Mammary epithelial cell (primary cell): ENCODE measurements at regions of chr2 and their contacts with region 1.

Region 1: DNA sequence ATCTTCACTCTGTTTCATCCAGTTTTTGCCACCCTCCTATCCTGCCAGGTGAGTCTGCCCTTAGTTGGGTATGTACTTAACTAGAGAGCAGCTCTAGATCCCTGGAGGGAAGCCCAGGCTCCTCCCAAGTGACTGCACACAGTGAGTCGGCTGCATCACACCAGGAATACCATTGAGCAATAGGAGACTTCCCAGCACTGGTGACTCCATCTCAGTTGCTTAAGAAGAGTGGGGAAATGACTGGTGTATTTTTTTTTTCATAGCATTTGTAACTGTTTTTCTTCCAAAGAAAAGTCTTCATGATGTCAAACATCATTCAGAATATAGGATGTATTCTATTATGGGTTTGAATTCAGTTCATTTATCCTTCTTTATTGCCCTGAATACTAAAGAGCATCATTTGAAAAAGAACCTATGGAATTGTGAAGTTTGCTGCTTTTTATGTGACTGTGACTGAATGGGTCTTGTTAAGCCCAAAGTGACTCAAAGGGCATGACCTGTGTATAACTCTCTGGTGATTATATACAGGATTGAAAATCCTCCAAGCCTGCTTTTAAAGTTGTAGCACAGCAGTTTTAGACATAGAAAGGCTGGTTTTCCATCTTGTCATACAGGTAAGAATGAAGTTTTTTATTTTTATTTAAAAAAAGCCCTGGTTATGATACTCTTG is 84.3 kb downstream of the MAP3K20 start:
- DNase-seq: peak; percentile 99
- H3K4me3 ChIP-seq: no peak overlapping the region
- H3K27ac ChIP-seq: peak overlapping the region; percentile 82
- H3K4me1 ChIP-seq: peaks cover 32% of the 10 kb centered on the region
- H3K27me3 ChIP-seq: no peaks in the 10 kb centered on the region
- CTCF ChIP-seq: no peak

Region 2: DNA sequence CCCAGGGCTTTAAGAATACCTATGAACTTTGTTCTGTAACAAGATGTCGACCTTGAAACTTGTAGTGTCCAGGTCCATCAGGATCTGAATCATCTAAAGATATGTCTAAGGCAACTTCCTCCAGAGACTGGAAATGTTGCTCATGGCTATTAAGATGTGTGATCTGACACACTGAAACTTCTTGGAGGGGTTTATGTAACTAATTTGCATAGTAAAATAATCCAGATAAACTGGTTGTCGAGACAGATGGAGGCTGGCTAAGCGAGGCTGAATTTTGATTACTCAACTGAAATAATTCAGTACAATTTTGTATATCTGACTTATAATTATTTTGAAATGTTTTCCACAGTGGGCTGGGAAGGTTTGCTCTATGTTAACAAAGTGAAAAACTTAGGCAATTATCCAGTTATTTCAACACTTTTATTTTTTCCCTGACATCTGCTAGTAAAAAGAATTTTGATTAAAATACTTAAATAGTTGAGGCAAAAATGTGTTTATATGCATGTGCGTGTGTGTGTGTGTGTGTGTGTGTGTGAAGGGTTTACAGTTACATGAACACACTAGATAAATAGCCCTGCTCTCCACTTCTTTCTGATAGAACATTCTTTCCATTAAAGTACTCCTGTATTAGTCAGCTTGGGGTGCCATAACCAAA is 95.7 kb before region 1 on chr2:
- CTCF ChIA-PET with region 1: no interaction called
- dilution Hi-C with region 1: no loop called
- in situ Hi-C with region 1: no loop called
- intact Hi-C with region 1: no loop called
- DNase-seq: no peak
- H3K4me3 ChIP-seq: no peak overlapping the region
- H3K27ac ChIP-seq: no peak overlapping the region
- H3K4me1 ChIP-seq: peaks cover 11% of the 10 kb centered on the region
- H3K27me3 ChIP-seq: no peaks in the 10 kb centered on the region
- CTCF ChIP-seq: no peak

Region 3: GRCh38 chr2:173124441-173124840 is 35.5 kb before region 1 on chr2:
- CTCF ChIA-PET with region 1: no interaction called
- dilution Hi-C with region 1: no loop called
- in situ Hi-C with region 1: no loop called
- intact Hi-C with region 1: loop called (anchors 1 kb)
- DNase-seq: peak; percentile 94
- H3K4me3 ChIP-seq: no peak overlapping the region
- H3K27ac ChIP-seq: peak overlapping the region; percentile 37
- H3K4me1 ChIP-seq: peaks cover 37% of the 10 kb centered on the region
- H3K27me3 ChIP-seq: no peaks in the 10 kb centered on the region
- CTCF ChIP-seq: peak in 1 of 2 donors; percentile 36

Region 4: DNA sequence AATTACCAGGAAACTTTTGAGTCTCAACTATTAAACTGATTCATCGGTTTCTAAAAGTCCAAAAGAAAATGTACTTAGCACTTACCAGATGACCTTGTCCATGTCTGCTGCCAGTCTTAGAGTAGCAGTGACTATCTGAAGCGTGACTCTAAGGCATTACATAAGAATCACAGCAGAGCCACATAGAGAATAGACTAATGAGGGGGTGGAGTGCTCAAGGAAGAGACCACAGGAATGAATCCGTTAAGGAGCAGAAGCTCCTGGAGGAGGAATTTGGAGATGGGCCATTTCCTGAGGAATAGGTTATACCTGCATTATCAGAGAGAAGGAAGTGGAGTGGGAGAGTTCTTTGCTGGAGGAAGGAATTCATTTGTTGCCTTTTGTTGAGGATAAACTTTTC is 31.7 kb after region 1 on chr2:
- CTCF ChIA-PET with region 1: no interaction called
- dilution Hi-C with region 1: no loop called
- in situ Hi-C with region 1: no loop called
- intact Hi-C with region 1: loop called (anchors 5 kb)
- DNase-seq: peak; percentile 78
- H3K4me3 ChIP-seq: no peak overlapping the region
- H3K27ac ChIP-seq: peak overlapping the region; percentile 76
- H3K4me1 ChIP-seq: peaks cover 32% of the 10 kb centered on the region
- H3K27me3 ChIP-seq: no peaks in the 10 kb centered on the region
- CTCF ChIP-seq: no peak